WTC11 (cell line): ENCODE measurements at regions of chr5 and their contacts with region 1.

Region 1: GRCh38 chr5:95781101-95781583 is 41.4 kb downstream of the GLRX start:
- DNase-seq: peak; percentile 77
- ATAC-seq: peak; percentile 99
- H3K4me3 Mint-ChIP-seq: no peak overlapping the region
- H3K27ac Mint-ChIP-seq: no peak overlapping the region
- H3K4me1 Mint-ChIP-seq: peaks cover 7% of the 10 kb centered on the region; the same call in 1 of the 2 replicates
- H3K27me3 Mint-ChIP-seq: no peaks in the 10 kb centered on the region; the same call in 1 of the 2 replicates
- CTCF ChIP-seq: peak; percentile 25; the same call in 1 of the 2 replicates

Region 2: DNA sequence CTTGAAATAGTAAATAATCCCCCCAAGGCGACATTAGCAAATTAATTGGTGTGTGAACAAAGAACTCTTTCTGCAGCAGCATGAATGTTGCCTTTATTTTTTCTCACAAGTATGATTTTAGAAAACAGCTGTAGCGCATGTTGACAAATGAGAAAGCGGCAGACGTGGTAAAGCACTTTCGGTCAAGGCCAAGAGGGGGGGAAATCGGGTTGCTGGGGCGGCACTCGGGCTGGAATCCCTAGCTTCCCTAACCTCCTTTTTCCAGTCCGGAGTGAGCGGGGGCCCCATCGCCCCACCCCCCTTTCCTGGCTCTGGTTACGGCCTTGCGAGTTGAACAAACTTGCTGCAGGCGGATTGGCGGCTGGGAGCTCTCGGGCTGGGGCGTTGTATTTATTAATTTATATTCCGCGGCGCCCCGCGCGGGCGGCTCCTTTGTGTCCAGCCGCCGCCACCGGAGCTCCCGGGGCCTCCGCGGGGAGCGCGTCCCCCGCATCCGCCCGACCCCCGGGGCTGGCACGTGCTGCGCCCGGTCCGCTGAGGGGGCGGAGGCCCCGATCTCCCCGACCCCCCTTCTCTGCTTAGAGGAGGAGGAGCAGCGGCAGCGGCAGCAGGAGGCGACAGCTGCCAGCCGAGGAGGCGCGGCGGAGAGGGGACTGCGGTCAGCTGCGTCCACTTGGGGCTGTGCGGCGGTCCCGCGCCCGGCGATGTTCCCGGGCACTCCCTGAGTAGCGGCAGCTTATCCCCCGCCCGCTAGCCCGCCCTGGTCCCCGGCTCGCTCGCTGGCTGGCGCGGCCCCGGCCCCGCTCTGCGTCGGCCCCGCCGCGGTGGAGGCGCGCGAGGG is 50.2 kb before region 1 on chr5 and contains the start of gene RHOBTB3:
- CTCF ChIA-PET with region 1: interaction called, 10 read pairs
- POLR2A ChIA-PET with region 1: no interaction called
- DNase-seq: peak; percentile 89
- ATAC-seq: peak; percentile 85
- H3K4me3 Mint-ChIP-seq: peak within 1 kb of the TSS; percentile 87
- H3K27ac Mint-ChIP-seq: peak within 1 kb of the TSS; percentile 59; the same call in 1 of the 2 replicates
- H3K4me1 Mint-ChIP-seq: peaks cover 48% of the 10 kb centered on the region
- H3K27me3 Mint-ChIP-seq: peaks cover 66% of the 10 kb centered on the region
- CTCF ChIP-seq: no peak
- total RNA-seq, gene RHOBTB3: 9.9 to 13.8 TPM (median 11.2 TPM) in 3 replicates

Region 3: DNA sequence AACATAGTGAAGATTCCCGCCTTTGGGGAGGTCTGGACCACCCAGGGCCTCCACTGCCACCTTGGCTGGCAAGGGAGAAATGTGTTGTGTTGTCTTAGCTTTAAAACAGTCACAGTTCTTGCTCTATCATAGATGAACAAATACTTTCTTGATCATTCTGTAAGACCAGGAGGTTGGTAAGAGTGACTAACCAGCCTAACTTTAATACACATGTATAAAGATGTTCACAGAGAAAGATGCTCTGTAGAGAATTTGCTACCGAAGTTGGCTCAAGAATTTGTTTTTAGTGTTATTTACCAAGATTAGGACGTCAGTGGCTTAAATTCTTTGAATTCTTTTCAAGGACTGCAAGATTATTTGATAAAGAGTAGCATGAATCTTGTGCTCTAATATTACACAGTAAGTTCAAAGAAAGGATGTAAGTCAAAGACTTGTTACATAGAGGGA is 13.0 kb after region 1 on chr5:
- CTCF ChIA-PET with region 1: interaction called, 10 read pairs
- POLR2A ChIA-PET with region 1: interaction called, 3 read pairs
- DNase-seq: no peak
- ATAC-seq: no peak
- H3K4me3 Mint-ChIP-seq: no peak overlapping the region
- H3K27ac Mint-ChIP-seq: no peak overlapping the region; the same call in 1 of the 2 replicates
- H3K4me1 Mint-ChIP-seq: no peaks in the 10 kb centered on the region
- H3K27me3 Mint-ChIP-seq: no peaks in the 10 kb centered on the region
- CTCF ChIP-seq: no peak

Region 4: DNA sequence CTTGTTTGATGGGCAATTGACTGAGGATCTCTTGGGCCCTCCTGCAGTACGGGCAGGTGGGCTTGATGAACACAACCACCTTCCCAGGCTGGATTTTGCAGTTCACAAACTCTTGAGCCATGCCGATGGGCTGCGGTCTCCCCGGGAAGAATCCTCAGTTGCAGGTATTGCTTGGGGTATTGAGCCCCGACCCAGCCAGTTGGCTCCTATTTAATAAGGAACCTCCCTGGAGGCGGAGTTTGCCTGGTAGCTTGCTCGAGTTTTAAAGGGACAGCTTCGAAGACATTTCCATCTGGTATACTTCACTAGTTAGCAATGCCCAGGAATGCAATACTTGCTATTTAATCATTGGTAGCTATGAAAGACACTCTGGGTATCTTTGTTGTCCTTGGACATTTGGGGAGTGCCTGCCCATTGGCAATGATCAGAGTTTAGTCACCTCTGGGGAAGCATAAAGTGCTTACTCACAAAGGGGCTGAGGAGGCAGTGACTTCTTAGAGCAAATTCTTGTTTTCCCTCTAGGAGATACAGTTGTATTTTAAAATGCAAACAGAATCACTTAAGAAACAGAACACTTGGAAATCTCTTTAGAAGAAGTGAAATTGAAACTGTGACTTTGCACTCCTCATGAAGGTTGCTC is 41.5 kb after region 1 on chr5 and contains the start of gene GLRX:
- CTCF ChIA-PET with region 1: interaction called, 27 read pairs
- POLR2A ChIA-PET with region 1: no interaction called
- DNase-seq: peak; percentile 56
- ATAC-seq: peak; percentile 86
- H3K4me3 Mint-ChIP-seq: peak within 1 kb of the TSS; percentile 88
- H3K27ac Mint-ChIP-seq: peak within 1 kb of the TSS; percentile 90
- H3K4me1 Mint-ChIP-seq: peaks cover 50% of the 10 kb centered on the region
- H3K27me3 Mint-ChIP-seq: no peaks in the 10 kb centered on the region; the same call in 1 of the 2 replicates
- CTCF ChIP-seq: no peak
- total RNA-seq, gene GLRX: 15.9 to 21.0 TPM (median 19.2 TPM) in 3 replicates

Region 5: DNA sequence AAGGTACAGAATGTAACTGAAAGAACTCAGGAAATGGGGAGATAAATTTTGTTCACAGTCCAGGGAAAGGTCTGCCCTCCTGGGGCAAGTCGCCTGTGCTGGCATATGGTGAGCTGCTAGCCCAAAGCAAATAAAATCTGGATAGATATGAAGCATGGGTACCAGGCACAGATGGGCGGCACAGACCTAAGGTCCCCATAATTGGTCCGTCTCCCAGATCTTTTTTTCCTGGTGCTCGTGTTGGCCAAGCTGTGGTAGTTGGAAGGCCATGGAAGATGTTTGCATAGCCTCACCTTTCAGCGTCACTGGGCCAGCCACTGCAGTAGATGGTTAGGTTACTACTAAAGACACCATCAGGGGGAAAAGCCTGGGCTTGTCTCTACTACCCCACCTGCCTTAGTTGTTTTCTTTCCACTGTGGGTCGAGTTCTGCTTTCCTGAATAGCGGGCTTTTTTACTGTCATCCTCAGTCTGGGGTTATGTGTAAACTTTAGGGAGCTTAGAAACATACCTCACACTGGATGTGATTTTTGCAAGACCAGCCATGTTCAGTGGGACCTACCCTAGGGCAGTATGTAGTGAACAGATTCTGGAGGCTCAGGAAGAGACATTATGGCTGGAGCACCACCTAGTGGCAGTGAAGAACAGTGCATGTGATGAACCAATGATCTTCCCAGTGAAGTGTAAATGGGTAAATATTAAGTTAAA is 65.6 kb after region 1 on chr5:
- CTCF ChIA-PET with region 1: interaction called, 51 read pairs
- POLR2A ChIA-PET with region 1: interaction called, 4 read pairs
- DNase-seq: peak; percentile 60
- ATAC-seq: peak; percentile 95
- H3K4me3 Mint-ChIP-seq: no peak overlapping the region
- H3K27ac Mint-ChIP-seq: no peak overlapping the region; the same call in 1 of the 2 replicates
- H3K4me1 Mint-ChIP-seq: peaks cover 2% of the 10 kb centered on the region; the same call in 1 of the 2 replicates
- H3K27me3 Mint-ChIP-seq: no peaks in the 10 kb centered on the region; the same call in 1 of the 2 replicates
- CTCF ChIP-seq: peak; percentile 83